ENCODE measurements at regions of chrX and their contacts with region 1.

Region 1: DNA sequence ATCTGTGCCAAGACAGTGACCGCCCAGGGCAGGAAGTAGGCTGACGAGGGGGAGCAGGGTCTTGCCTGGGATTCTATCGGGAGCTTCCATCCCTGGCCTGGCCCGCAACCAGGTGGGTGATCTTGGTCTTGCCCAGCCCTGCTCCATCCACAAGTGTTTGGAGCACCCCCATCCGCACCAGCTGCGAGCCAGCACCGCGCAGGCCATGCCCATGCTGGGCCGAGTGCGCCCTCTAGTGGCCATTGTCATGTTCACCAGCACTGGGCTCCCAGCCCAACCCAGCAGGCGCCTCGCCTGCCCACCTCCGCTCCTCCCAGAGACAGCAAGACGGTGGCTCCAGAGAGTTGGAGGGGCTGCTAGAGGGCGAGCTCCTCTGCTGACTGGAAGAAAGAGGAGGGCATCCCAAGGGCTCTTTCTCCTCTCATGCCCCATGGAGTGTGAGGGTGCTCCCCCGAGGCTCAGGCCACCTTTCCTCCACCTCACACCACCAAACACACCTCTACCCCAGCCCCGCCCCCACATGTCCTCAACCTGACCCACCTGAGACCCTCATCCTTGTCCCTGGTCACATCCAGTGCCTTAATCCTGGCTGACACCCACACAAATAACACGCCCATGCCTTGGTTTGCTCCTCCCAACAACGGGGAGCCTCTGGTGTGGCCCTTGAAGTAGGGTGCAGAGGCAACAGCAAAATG is 9.8 kb upstream of the ATP2B3 start:
- DNase-seq: peak; percentile 92
- H3K4me3 ChIP-seq: no peak overlapping the region
- H3K27ac ChIP-seq: no peak overlapping the region
- H3K4me1 ChIP-seq: peaks cover 0 to 9% (median 8%) of the 10 kb centered on the region in 4 donors
- H3K27me3 ChIP-seq: no peaks in the 10 kb centered on the region
- CTCF ChIP-seq: peak; percentile 72 to 84 (median 75)
- EP300 ChIP-seq: no peak
- POLR2A ChIP-seq: no peak

Region 2: DNA sequence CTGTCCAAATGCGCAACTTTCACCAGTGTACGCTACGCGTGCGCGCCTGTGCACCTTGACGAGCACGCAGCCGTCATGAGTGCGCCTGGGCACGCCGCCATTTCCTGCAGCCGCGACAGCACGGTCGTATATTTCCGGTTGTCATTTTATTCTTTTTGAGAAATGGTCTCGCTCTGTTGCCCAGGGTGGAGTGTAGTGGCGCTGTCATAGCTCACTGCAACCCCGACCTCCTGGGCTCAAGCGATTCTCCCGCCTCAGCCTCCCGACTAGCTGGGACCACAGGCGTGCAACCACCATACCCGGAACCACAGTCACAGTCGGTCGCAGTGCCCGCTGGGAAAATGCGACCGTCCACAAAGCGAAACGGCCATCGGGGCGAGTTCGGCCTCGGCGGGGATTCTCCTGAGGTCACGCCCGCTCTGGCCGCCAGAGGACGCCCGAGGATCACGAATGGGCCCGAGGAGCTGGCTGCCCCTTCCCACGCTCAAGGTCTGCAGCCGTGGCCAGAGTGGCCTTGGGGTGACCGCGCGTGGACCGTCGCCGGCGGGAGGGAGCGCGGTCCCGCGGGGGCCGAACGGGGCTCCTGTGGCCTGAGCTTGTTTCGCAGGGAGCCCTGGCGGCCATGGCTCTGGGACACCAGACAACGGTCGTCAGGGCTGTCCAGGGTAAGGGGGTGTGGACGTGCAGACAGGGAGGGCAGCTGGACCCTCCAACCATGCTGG is 475.1 kb before region 1 on chrX:
- intact Hi-C with region 1: loop called (anchors 5 kb)
- DNase-seq: peak; percentile 90
- H3K4me3 ChIP-seq: peak overlapping the region; percentile 33 to 53 (median 44)
- H3K27ac ChIP-seq: no peak overlapping the region
- H3K4me1 ChIP-seq: peaks cover 0 to 7% (median 5%) of the 10 kb centered on the region in 4 donors
- H3K27me3 ChIP-seq: peaks cover 0 to 7% (median 0%) of the 10 kb centered on the region in 4 donors
- CTCF ChIP-seq: peak; percentile 73 to 90 (median 81)
- EP300 ChIP-seq: no peak
- POLR2A ChIP-seq: no peak

Region 3: DNA sequence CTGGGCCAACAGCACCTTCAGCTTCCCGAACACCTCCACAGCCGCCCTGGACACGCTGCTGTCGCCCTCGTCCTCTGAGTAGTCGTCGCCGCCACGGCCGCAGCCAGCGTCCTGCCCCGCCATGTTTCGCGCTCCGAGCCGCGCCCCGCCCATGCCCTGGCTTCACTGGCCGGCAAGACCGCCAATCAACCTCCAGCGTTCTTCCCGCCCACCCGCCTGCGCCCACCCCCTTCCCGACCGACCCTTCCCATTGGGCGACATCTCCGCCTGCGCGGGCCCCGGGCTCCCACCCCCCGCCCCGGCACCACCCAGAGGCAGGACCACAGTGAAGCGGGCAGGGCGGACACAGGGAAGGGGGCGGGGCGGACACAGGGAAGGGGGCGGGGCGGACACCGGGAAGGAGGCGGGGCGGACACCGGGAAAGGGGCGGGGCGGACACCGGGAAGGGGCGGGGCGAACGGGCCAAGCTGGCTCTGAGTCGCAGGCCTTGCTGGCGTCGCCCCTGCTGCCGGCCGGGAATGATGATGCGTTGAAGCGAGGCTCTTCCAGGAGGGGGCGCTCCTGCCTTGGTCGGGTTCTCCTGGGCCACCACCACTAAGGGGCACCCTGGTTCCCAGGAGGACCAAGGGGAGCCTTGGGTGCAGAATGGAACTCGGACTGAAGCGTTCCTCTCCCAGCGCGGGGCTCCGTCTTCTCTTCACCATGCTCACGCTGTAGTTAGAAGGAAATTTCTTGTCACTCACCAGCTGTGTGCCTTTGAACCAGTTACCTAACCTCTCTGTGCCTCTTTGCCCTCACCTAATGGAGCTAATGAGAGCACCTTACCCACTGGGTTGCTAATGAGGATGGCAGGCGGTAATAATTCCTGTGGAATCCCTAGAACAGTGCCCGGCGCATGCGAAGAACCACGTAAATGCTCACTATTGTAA is 36.9 kb before region 1 on chrX and contains the start of gene HAUS7:
- intact Hi-C with region 1: loop called (anchors 2 kb)
- DNase-seq: peak; percentile 98
- H3K4me3 ChIP-seq: peak within 1 kb of the TSS; percentile 66 to 75 (median 68)
- H3K27ac ChIP-seq: peak within 1 kb of the TSS; percentile 67 to 87 (median 72)
- H3K4me1 ChIP-seq: peaks cover 14 to 39% (median 33%) of the 10 kb centered on the region in 4 donors
- H3K27me3 ChIP-seq: peaks cover 0 to 1% (median 0%) of the 10 kb centered on the region in 4 donors
- CTCF ChIP-seq: peak; percentile 65 to 68 (median 68)
- EP300 ChIP-seq: no peak
- POLR2A ChIP-seq: no peak
- total RNA-seq, gene HAUS7: 23.4 to 25.8 (median 24.2) TPM

Measured in esophagus muscularis mucosa (tissue), 4 donors.